T-cell (primary cell): ENCODE measurements at regions of chr1 and their contacts with region 1.

Region 1: GRCh38 chr1:222465211-222466041 is 82.5 kb downstream of the HHIPL2 start:
- DNase-seq: peak; percentile 36 to 85 (median 64)
- ATAC-seq: peak; percentile 90 to 98 (median 92)
- H3K4me3 ChIP-seq: peak overlapping the region; percentile 15 to 38
- H3K4me3 Mint-ChIP-seq: peak overlapping the region; percentile 79 to 83 (median 80)
- H3K27ac ChIP-seq: peak overlapping the region; percentile 21
- H3K27ac Mint-ChIP-seq: peak overlapping the region; percentile 81 to 86
- H3K4me1 ChIP-seq: peaks cover 0 to 10% of the 10 kb centered on the region in 2 experiments
- H3K4me1 Mint-ChIP-seq: peaks cover 6 to 12% (median 11%) of the 10 kb centered on the region in 3 donors
- H3K27me3 ChIP-seq: peaks cover 0 to under 1% of the 10 kb centered on the region in 2 experiments
- H3K27me3 Mint-ChIP-seq: peaks cover 0 to 1% of the 10 kb centered on the region in 2 donors

Region 2: GRCh38 chr1:222455188-222455879 is 10.1 kb before region 1 on chr1:
- CTCF ChIA-PET with region 1: interaction called, 5 to 10 read pairs
- POLR2A ChIA-PET with region 1: no interaction called
- DNase-seq: peak; percentile 59 to 92 (median 77)
- ATAC-seq: peak; percentile 97 to 99 (median 98)
- H3K4me3 ChIP-seq: no peak overlapping the region
- H3K4me3 Mint-ChIP-seq: peak overlapping the region in 2 of 3 donors; percentile 10 to 32
- H3K27ac ChIP-seq: no peak overlapping the region
- H3K27ac Mint-ChIP-seq: peak overlapping the region; percentile 69 to 84
- H3K4me1 ChIP-seq: peaks cover 5 to 10% of the 10 kb centered on the region in 2 experiments
- H3K4me1 Mint-ChIP-seq: peaks cover 18 to 26% (median 24%) of the 10 kb centered on the region in 3 donors
- H3K27me3 ChIP-seq: peaks cover 0 to 2% of the 10 kb centered on the region in 2 experiments
- H3K27me3 Mint-ChIP-seq: peaks cover 0 to 4% of the 10 kb centered on the region in 2 donors

Region 3: GRCh38 chr1:222829868-222830267 is 364.4 kb after region 1 on chr1:
- CTCF ChIA-PET with region 1: no interaction called
- POLR2A ChIA-PET with region 1: no interaction called
- DNase-seq: no peak
- ATAC-seq: no peak
- H3K4me3 ChIP-seq: no peak overlapping the region
- H3K4me3 Mint-ChIP-seq: no peak overlapping the region
- H3K27ac ChIP-seq: no peak overlapping the region
- H3K27ac Mint-ChIP-seq: no peak overlapping the region
- H3K4me1 ChIP-seq: no peaks in the 10 kb centered on the region
- H3K4me1 Mint-ChIP-seq: peaks cover 3 to 8% (median 4%) of the 10 kb centered on the region in 3 donors
- H3K27me3 ChIP-seq: no peaks in the 10 kb centered on the region
- H3K27me3 Mint-ChIP-seq: no peaks in the 10 kb centered on the region